ENCODE measurements at regions of chr5 and their contacts with region 1.

Region 1: DNA sequence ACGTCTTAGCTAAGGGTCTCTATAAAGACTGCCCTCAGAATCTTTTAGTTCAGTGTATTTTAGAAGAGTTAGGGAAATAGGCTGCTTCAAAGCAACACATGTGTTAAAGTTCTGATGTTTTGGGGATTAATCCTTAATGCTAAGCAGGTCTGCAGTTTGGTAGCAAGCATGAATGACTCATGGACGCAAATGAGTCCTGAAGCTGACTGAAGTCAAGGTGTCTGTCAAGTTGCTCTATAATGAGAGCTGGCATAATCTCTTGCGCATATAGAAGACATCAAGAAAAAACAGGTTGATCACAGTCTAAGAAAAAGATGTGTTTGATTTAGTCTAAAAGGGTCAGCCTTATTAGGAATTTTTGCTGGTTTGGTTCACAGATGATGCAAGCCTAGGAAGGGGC is 630.1 kb downstream of the CDH12 start:
- DNase-seq: no peak
- ATAC-seq: no peak

Region 2: DNA sequence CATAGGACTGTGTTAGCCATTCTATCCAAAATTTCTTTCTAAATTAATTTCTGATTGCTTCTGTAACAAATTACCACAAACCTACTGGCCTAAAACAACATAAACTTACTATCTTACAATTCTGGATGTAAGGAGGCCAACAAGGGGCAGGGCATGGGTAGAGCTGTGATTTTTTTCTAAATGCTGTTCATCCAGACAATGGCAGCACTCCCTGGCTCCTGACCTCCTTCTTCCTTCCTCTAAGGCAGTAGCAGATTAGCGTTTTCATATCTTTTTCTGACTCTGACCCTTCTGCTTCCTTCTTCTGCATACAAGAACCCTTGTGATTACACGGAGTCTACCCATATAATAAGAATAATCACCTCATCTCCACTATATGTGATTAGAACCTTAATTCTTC is 375.8 kb before region 1 on chr5:
- intact Hi-C with region 1: no loop called
- DNase-seq: no peak
- ATAC-seq: no peak

Region 3: DNA sequence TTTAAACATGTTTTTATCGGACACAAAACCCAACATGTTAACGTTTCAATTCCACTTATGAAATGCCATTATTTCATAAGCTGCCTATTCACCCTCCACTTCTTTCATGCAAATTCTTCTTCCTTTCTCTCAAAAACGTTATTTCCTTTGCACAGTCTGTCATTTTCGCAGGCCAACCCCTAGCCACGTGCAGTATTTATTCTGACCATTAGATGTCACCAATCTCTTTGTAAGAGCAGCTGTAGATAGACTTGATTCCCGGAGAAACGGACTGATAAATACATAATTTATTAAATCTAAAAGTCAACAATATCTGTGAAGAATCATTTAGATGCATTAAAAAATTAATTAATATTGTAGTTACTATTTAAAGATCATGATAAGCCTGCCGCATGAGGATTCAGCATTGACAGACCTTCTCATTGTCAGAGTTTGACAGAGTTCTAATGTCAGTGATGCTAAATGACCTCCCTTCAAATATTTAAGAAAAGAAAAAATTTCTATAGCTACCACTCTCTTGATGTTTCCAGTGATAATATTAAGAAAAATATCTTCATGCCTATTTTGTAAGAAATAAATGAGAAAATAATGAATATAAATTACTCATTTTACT is 303.6 kb before region 1 on chr5:
- intact Hi-C with region 1: loop called in 1 of 2 experiments (anchors 10 kb)
- DNase-seq: no peak
- ATAC-seq: no peak

Region 4: GRCh38 chr5:22053195-22053594 is 169.9 kb before region 1 on chr5:
- intact Hi-C with region 1: no loop called
- DNase-seq: no peak
- ATAC-seq: no peak

Region 5: GRCh38 chr5:22242537-22242936 is 19.5 kb after region 1 on chr5:
- intact Hi-C with region 1: loop called in 1 of 2 experiments (anchors 2 kb)
- DNase-seq: no peak
- ATAC-seq: no peak

Region 6: DNA sequence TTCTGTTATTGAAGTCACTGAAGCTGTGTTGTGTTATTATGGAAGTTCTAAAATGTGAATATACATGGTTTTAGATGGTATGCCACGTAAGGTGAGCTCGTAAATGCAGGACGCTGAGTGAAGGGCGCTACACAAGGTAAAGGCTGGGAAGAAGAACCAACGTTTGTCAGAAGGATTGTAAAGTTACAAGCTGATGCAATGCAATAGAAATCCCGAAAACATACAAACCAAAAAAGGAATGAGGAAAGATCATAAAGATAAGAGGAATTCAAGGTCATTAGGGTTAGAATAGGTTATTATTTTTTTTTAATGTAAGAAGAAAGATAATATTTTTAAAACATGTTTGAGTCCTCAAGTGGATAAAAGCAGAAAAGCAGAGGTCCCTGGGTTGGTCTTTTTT is 91.5 kb after region 1 on chr5:
- intact Hi-C with region 1: no loop called
- DNase-seq: no peak
- ATAC-seq: no peak

Measured in left cardiac atrium (tissue), 4 donors.